HepG2 (cell line): ENCODE measurements at regions of chr11 and their contacts with region 1.

Region 1: GRCh38 chr11:809287-810039 is at the start of gene RPLP2:
- DNase-seq: peak; percentile 93
- ATAC-seq: peak; percentile 82
- H3K4me3 ChIP-seq: peak within 1 kb of the TSS; percentile 97 to 100 (median 99)
- H3K27ac ChIP-seq: peak within 1 kb of the TSS; percentile 95
- H3K4me1 ChIP-seq: peaks cover 52% of the 10 kb centered on the region
- H3K27me3 ChIP-seq: no peaks in the 10 kb centered on the region; a peak in 1 of 5 replicates
- CTCF ChIP-seq: no peak; the same call in none of the 2 replicates
- EP300 ChIP-seq: peak in 1 of 2 experiments; percentile 7; a peak in 1 of 4 replicates
- POLR2A ChIP-seq: peak in 1 of 2 experiments; percentile 88; a peak in 2 of 4 replicates
- RAD21 ChIP-seq: peak; percentile 18; the same call in 1 of the 2 replicates
- total RNA-seq, gene RPLP2: 2,049 and 2,106 TPM in 2 replicates

Region 2: DNA sequence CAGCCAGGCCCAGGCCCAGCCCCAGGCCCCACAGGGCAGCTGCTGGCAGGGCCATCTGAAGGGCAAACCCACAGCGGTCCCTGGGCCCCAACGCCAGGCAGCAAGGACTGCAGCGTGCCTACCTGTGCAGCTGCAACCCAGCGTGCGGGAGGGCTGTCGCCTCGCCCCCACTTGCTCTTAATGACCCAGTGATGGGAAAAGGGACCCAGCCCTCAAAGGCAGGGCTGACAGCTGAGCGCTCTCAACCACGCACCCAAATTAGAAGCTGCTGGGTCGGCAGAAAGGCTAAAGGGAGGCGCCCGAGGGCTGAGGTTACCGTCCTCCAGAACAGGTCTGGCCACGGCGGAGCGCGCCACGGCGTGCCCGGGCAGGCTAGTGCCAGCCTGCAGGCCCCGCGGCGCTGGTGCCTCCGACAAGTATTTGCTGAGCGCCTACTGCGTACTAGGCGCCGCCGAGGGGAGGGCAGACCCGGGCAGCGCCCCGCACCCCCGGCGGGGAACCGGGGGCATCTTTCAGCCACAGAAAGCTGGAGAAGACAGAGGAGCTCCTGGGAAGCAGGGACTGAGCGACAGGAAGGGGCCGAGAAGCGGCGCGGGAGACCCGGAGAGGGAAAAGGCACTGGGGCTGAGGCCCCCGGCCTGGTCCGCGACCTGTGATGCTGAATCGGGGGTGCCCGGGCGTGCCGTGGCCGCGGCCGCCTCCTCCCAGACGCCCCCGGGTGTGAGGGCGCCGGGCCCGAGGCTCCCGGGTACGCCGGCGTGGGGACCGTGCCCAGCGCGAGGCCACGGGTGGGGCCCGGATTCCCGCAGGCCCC is 274.9 kb before region 1 on chr11:
- CTCF ChIA-PET with region 1: no interaction called
- POLR2A ChIA-PET with region 1: no interaction called
- in situ Hi-C with region 1: no loop called
- intact Hi-C with region 1: no loop called
- DNase-seq: no peak
- ATAC-seq: no peak
- H3K4me3 ChIP-seq: peak overlapping the region; percentile 93 to 95 (median 95)
- H3K27ac ChIP-seq: peak overlapping the region; percentile 49
- H3K4me1 ChIP-seq: peaks cover 35% of the 10 kb centered on the region
- H3K27me3 ChIP-seq: 0 out of 5 replicates have a peak, but pooled peaks cover 0 to under 1% of the 10 kb centered on the region in 2 experiments
- CTCF ChIP-seq: no peak
- EP300 ChIP-seq: no peak
- POLR2A ChIP-seq: no peak
- RAD21 ChIP-seq: 0 out of 2 replicates have a peak, but pooled peaks have one; percentile 9

Region 3: DNA sequence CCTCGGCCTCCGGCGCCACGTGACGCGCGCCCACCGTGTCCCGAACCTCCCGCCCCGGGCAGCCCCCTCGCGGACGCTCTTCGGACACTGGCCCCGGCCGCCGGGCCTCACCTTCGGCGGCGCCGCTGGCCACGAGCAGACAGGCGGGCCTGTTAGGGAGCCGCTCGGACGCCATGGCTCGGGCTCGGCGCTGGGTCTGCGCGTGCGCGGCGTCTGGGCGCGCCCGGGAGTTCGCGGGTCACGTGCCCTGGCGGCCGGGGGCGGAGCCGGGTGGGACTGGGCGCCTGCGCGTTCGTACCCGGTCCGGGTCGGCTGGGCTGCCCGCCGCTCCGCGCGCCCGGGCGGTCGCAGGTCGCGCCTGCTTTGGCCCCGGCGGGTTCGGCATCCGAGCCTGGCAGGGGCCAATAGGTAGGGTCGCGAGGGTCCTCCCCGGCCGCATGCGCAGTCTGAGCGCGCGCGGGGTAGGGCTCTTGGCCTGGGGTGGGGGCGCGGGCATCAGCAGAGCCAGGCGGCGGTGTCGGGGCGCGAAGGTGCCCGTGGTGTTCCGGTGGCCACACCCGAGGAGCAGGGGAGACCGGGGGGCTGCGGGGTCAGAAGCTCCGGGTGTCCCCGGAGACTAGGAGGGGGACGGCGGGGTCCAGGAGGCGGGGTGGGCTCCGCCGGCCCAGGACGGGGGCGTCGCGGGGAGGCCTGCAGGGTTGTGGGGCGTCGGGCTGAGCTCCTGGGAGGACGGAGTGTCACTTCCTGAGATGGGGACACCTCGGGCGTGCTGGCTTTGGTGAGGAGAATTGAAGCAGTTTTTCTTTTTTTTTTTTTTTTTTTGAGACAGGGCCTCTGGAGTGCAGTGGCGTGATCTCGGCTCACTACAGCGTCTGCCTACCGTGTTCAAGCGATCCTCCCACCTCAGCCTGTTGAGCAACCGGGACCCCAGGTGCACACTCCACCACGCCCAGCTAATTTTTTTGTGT is 31.9 kb before region 1 on chr11 and contains the start of gene GATD1:
- CTCF ChIA-PET with region 1: no interaction called
- POLR2A ChIA-PET with region 1: interaction called, 12 read pairs
- in situ Hi-C with region 1: no loop called
- intact Hi-C with region 1: no loop called
- DNase-seq: peak; percentile 73
- ATAC-seq: peak; percentile 73
- H3K4me3 ChIP-seq: peak within 1 kb of the TSS; percentile 87 to 92 (median 90)
- H3K27ac ChIP-seq: peak within 1 kb of the TSS; percentile 75
- H3K4me1 ChIP-seq: peaks cover 41% of the 10 kb centered on the region
- H3K27me3 ChIP-seq: no peaks in the 10 kb centered on the region
- CTCF ChIP-seq: no peak
- EP300 ChIP-seq: 0 out of 4 replicates have a peak, but pooled peaks of 1 of the 2 experiments have one; percentile 9
- POLR2A ChIP-seq: peak in 1 of 2 experiments; percentile 57; a peak in 2 of 4 replicates
- RAD21 ChIP-seq: 0 out of 2 replicates have a peak, but pooled peaks have one; percentile 25
- total RNA-seq, gene GATD1: 35.8 and 60.5 TPM in 2 replicates

Region 4: GRCh38 chr11:798093-798713 is 11.3 kb before region 1 on chr11 and contains the start of gene SLC25A22:
- CTCF ChIA-PET with region 1: no interaction called
- POLR2A ChIA-PET with region 1: interaction called, 30 read pairs
- in situ Hi-C with region 1: no loop called
- intact Hi-C with region 1: no loop called
- DNase-seq: peak; percentile 49
- ATAC-seq: peak; percentile 52
- H3K4me3 ChIP-seq: peak within 1 kb of the TSS; percentile 70 to 97 (median 94)
- H3K27ac ChIP-seq: peak within 1 kb of the TSS; percentile 80
- H3K4me1 ChIP-seq: peaks cover 4% of the 10 kb centered on the region
- H3K27me3 ChIP-seq: no peaks in the 10 kb centered on the region; a peak in 1 of 5 replicates
- CTCF ChIP-seq: peak; percentile 78
- EP300 ChIP-seq: no peak
- POLR2A ChIP-seq: no peak
- RAD21 ChIP-seq: peak; percentile 87
- total RNA-seq, gene SLC25A22: 8.0 and 12.4 TPM in 2 replicates

Region 5: GRCh38 chr11:832321-833113 is 23.1 kb after region 1 on chr11 and contains the start of gene CD151:
- CTCF ChIA-PET with region 1: no interaction called
- POLR2A ChIA-PET with region 1: interaction called, 18 read pairs
- in situ Hi-C with region 1: no loop called
- intact Hi-C with region 1: no loop called
- DNase-seq: no peak
- ATAC-seq: peak; percentile 7
- H3K4me3 ChIP-seq: peak within 1 kb of the TSS; percentile 71 to 81 (median 77)
- H3K27ac ChIP-seq: peak within 1 kb of the TSS; percentile 61
- H3K4me1 ChIP-seq: peaks cover 75% of the 10 kb centered on the region
- H3K27me3 ChIP-seq: no peaks in the 10 kb centered on the region
- CTCF ChIP-seq: no peak
- EP300 ChIP-seq: no peak
- POLR2A ChIP-seq: no peak
- RAD21 ChIP-seq: 0 out of 2 replicates have a peak, but pooled peaks have one; percentile 18
- total RNA-seq, gene CD151: 54.0 and 125 TPM in 2 replicates

Region 6: GRCh38 chr11:842370-843002 is 33.0 kb after region 1 on chr11 and contains the starts of genes POLR2L and TSPAN4:
- CTCF ChIA-PET with region 1: no interaction called
- POLR2A ChIA-PET with region 1: interaction called, 22 read pairs
- in situ Hi-C with region 1: no loop called
- intact Hi-C with region 1: loop called (anchors 5 kb)
- DNase-seq: peak; percentile 78
- ATAC-seq: peak; percentile 13
- H3K4me3 ChIP-seq: peak within 1 kb of the TSS; percentile 97 to 100 (median 98)
- H3K27ac ChIP-seq: peak within 1 kb of the TSS; percentile 83
- H3K4me1 ChIP-seq: peaks cover 65% of the 10 kb centered on the region
- H3K27me3 ChIP-seq: no peaks in the 10 kb centered on the region
- CTCF ChIP-seq: no peak; the same call in 1 of the 2 replicates
- EP300 ChIP-seq: no peak
- POLR2A ChIP-seq: peak in 1 of 2 experiments; percentile 96; a peak in 2 of 4 replicates
- RAD21 ChIP-seq: peak; percentile 69
- total RNA-seq, gene POLR2L: 114 and 146 TPM in 2 replicates
- total RNA-seq, gene TSPAN4: 13.2 and 31.7 TPM in 2 replicates